Dorsolateral prefrontal cortex (tissue), 120 donors: ENCODE measurements at regions of chr17 and their contacts with region 1.

Region 1: GRCh38 chr17:78360371-78361224 is 721 bp upstream of the SOCS3 start:
- DNase-seq: peak; percentile 51 to 91 (median 82)
- H3K4me3 ChIP-seq: peak overlapping the region; percentile 8 to 87 (median 63)
- H3K27ac ChIP-seq: peak overlapping the region in 56 of 59 donors; percentile 39 to 93 (median 84)
- H3K27me3 ChIP-seq: peaks cover 0 to 15% (median 0%) of the 10 kb centered on the region in 45 donors
- CTCF ChIP-seq: peak; percentile 53 to 92 (median 81)

Region 2: DNA sequence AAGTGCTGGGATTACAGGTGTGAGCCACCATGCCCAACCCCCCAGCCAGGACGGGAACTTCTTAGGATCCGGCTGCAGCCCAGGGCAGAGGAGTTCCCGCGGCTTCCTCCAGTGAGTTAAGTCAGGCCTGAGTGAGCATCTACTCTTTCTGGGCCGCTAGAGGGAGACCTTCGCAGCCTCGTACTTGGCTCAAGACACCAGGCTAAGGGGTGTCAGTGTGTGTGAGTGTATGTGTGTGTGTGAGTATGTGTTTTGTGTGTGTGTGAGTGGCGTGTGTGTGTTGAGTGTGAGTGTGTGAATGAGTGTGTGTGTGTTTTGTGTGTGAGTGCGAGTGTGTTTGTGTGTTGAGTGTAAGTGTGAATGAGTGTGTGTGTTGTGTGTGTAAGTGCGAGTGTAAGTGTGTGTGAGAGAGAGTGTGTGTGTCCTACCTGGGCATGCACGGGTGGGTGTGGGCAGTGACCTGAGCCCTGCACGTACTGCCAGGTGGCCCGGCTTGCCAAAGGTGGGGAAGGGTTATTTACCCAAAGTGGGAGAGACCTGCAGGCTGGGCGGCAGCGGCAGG is 70.7 kb before region 1 on chr17:
- intact Hi-C with region 1: loop called (anchors 5 kb)
- DNase-seq: peak; percentile 51 to 83 (median 72)
- H3K4me3 ChIP-seq: no peak overlapping the region
- H3K27ac ChIP-seq: no peak overlapping the region
- H3K27me3 ChIP-seq: no peaks in the 10 kb centered on the region
- CTCF ChIP-seq: peak; percentile 17 to 80 (median 69)

Region 3: GRCh38 chr17:78341559-78342448 is 18.8 kb before region 1 on chr17:
- intact Hi-C with region 1: loop called in 1 of 2 experiments (anchors 1 kb)
- DNase-seq: peak in 8 of 10 donors; percentile 44 to 85 (median 64)
- H3K4me3 ChIP-seq: peak overlapping the region; percentile 24 to 65 (median 49)
- H3K27ac ChIP-seq: peak overlapping the region in 58 of 59 donors; percentile 48 to 95 (median 86)
- H3K27me3 ChIP-seq: no peaks in the 10 kb centered on the region
- CTCF ChIP-seq: peak in 34 of 56 donors; percentile 9 to 57 (median 36)

Region 4: DNA sequence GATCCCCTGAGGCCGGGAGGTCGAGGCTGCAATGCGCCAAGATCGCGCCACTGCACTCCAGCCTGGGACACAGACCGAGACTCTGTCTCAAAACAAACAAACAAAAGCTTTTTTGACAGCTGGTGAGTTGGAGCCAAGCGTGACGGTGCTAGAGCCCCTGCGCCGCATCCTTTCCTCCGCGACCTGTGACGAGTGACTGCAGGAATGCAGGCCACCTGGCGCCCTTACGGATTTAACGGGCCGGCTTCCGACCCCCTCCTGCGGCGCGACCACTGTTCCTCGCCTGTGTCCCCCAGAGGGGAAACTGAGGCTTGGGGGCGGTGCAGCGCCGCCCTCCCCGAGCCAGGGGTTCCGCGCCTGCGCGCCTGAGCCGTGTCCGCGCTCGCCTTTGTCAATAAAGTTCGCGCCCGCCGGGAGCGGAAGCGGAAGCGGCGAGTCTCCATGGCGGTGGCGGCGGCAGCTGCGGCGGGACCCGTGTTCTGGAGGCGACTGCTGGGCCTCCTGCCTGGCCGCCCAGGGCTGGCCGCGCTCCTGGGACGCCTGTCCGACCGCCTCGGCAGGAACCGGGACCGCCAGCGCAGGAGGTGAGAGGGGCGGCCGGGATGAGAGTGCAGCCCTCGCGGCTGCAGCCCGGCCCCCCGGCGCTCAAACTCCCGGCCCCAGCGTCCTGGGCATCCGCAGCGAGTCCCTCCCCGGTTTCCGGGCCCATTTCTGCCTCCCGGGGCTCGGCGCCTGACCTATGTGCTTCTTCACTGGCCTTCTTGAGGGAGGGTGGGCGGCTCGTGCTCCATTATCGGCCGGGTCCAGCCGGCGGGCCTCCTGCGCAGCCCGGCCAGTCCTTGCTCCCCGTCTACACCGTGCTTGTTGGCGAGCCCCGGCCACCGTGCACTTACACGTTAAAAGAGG is 17.9 kb after region 1 on chr17 and contains the start of gene PGS1:
- intact Hi-C with region 1: loop called in 1 of 2 experiments (anchors 1 kb)
- DNase-seq: peak; percentile 61 to 89 (median 76)
- H3K4me3 ChIP-seq: peak within 1 kb of the TSS; percentile 67 to 100 (median 97)
- H3K27ac ChIP-seq: peak within 1 kb of the TSS; percentile 43 to 98 (median 90)
- H3K27me3 ChIP-seq: no peaks in the 10 kb centered on the region
- CTCF ChIP-seq: peak in 46 of 56 donors; percentile 10 to 65 (median 38)
- total RNA-seq, gene PGS1: 40.3 to 89.2 (median 57.6) TPM

Region 5: GRCh38 chr17:78458736-78459331 is 98.2 kb after region 1 on chr17:
- intact Hi-C with region 1: no loop called
- DNase-seq: peak; percentile 69 to 99 (median 96)
- H3K4me3 ChIP-seq: peak overlapping the region in 57 of 59 donors; percentile 1 to 64 (median 37)
- H3K27ac ChIP-seq: peak overlapping the region; percentile 41 to 100 (median 97)
- H3K27me3 ChIP-seq: no peaks in the 10 kb centered on the region
- CTCF ChIP-seq: peak in 17 of 56 donors; percentile 3 to 46 (median 26)